Adrenal gland (tissue), 19 donors: ENCODE measurements at regions of chr2 and their contacts with region 1.

Region 1: GRCh38 chr2:218648088-218648786 is 11.2 kb downstream of the ZNF142 start:
- DNase-seq: peak; percentile 46 to 83 (median 59)
- H3K4me3 ChIP-seq: no peak overlapping the region
- H3K27ac ChIP-seq: no peak overlapping the region
- H3K4me1 ChIP-seq: no peaks in the 10 kb centered on the region
- H3K27me3 ChIP-seq: no peaks in the 10 kb centered on the region
- CTCF ChIP-seq: peak; percentile 71 to 83 (median 73)
- POLR2A ChIP-seq: no peak

Region 2: DNA sequence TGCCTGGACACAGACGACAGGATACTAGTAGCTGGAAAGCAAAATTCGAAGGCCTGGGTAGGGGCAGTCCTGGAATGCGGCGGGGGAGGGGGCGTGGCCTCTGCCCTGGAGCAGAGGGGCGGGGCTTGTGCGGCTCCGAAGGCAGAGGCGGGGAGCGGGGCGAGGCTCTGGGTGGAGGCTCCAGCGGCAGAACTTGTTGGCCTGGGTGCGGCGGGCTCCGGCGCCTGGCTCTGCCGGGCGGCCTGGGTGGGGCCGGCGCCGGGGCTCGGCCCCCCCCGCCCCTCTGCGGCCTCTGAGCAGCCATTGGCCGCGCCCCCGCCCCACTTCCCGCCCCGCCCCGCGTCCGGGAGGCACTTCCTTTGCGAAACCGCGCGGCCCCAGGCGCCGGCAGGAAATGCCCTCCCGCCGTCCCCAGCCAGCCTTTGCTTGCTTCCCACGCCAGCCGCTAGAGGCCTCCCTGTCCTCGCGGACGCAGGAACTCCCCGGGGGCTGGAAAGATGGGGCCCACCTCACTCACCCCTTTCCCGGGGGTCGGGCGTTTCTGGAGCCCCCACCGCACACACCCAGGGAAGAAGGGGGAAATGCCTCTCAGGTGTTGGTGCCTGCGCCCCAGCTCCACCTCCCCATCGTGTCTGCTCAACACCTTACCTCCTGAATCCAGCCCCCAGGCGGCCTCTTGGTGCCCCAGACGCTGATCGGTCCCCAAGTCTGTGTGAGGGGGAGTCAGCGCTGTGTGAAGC is 241.9 kb before region 1 on chr2:
- intact Hi-C with region 1: loop called (anchors 10 kb)
- DNase-seq: peak; percentile 97 to 98 (median 98)
- H3K4me3 ChIP-seq: peak overlapping the region in 3 of 4 donors; percentile 14 to 54 (median 25)
- H3K27ac ChIP-seq: peak overlapping the region; percentile 46 to 94 (median 68)
- H3K4me1 ChIP-seq: peaks cover 17 to 44% of the 10 kb centered on the region in 2 donors
- H3K27me3 ChIP-seq: no peaks in the 10 kb centered on the region
- CTCF ChIP-seq: peak; percentile 57 to 87 (median 81)
- POLR2A ChIP-seq: no peak

Region 3: DNA sequence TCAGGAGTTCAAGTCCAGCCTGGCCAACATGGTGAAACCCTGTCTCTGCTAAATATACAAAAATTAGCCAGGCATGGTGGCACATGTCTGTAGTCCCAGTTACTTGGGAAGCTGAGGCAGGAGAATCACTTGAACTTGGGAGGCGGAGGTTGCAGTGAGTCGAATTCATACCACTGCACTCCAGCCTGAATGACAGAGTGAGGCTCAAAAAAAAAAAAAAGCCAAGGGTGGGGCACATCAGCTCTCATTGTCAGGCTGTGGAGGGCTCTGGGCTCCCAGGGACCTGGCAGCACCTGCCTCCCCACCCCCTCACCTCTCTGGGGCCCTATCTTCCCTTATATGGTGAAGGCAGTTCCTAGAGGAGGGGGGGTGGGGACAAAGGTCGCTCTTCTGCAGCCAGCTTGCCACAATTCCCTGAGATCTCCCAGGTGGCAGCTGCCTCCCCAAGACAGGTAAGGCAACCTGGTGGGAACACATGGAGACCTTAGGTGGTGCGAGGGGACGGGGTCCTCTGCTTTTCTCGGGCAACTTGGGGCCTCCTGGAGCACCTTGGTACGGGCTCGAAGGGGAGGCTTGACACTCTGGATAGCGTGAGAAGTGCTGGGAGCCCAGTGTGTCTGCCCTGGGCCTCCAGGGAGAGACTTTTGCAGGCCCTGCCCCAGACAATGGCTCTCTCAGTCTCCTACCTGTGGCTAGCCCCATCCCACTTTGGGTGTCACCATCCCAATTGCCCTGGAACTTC is 229.3 kb before region 1 on chr2 and contains the start of gene VIL1:
- intact Hi-C with region 1: loop called in 1 of 2 experiments (anchors 10 kb)
- DNase-seq: no peak
- H3K4me3 ChIP-seq: no peak within 1 kb of the TSS
- H3K27ac ChIP-seq: no peak within 1 kb of the TSS
- H3K4me1 ChIP-seq: no peaks in the 10 kb centered on the region
- H3K27me3 ChIP-seq: no peaks in the 10 kb centered on the region
- CTCF ChIP-seq: no peak
- POLR2A ChIP-seq: no peak
- total RNA-seq, gene VIL1: 0.47 to 4.5 (median 0.53) TPM in 3 of 9 donors, not detected in the others

Region 4: GRCh38 chr2:218569661-218570500 is 78.4 kb before region 1 on chr2:
- intact Hi-C with region 1: loop called in 1 of 2 experiments (anchors 10 kb)
- DNase-seq: peak; percentile 48 to 86 (median 76)
- H3K4me3 ChIP-seq: peak overlapping the region in 2 of 4 donors; percentile 80 to 92
- H3K27ac ChIP-seq: peak overlapping the region; percentile 96 to 99 (median 97)
- H3K4me1 ChIP-seq: peaks cover 21 to 41% of the 10 kb centered on the region in 2 donors
- H3K27me3 ChIP-seq: no peaks in the 10 kb centered on the region
- CTCF ChIP-seq: no peak
- POLR2A ChIP-seq: peak in 1 of 2 donors; percentile 63